Activated CD4-positive, alpha-beta T cell treated with anti-CD3 and anti-CD28 coated beads for 36 hours (primary cell): ENCODE measurements at regions of chr16 and their contacts with region 1.

Region 1: GRCh38 chr16:84504420-84505248 is at the start of gene MEAK7:
- DNase-seq: peak; percentile 99
- ATAC-seq: peak; percentile 96
- H3K4me3 Mint-ChIP-seq: peak within 1 kb of the TSS; percentile 89
- H3K27ac Mint-ChIP-seq: peak within 1 kb of the TSS; percentile 90
- H3K4me1 Mint-ChIP-seq: peaks cover 39% of the 10 kb centered on the region
- H3K27me3 Mint-ChIP-seq: no peaks in the 10 kb centered on the region
- total RNA-seq, gene MEAK7: 8.9 to 10.6 TPM

Region 2: DNA sequence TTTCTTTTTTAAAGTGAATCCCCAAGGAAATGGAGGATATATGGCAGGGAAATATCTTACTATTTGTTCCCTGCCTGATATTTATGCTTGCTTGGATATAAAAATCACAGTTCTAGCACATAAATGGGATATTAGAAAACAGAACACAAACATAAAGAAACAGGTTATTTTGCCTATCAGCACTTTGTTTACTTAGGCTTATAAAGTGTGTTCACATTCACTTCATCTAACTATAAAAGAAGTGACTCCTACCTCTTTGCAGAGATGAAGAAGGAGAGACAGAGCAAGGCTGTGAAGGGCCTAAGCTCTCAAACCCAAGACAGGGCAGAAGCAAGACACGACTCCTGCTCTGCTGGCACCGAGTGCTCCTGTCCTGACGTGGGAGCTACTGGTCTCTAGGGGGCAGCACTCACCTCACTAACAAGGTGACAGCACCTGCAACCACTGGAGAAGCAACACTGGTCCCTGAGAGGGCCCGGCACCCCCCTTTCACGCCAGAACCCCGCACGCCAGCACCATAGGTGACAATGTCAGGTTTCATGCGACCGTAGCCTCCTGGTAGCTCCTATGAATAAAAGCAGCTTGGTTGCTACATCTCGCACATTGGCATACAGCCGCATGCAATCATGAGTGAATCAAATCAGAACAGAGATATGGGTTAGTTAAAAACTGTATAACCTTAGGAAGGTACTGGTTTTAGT is 419.9 kb before region 1 on chr16:
- CTCF ChIA-PET with region 1: interaction called, 4 read pairs
- POLR2A ChIA-PET with region 1: no interaction called
- intact Hi-C with region 1: loop called in 1 of 2 experiments (anchors 10 kb)
- DNase-seq: peak; percentile 83
- ATAC-seq: peak; percentile 79
- H3K4me3 Mint-ChIP-seq: no peak overlapping the region
- H3K27ac Mint-ChIP-seq: no peak overlapping the region
- H3K4me1 Mint-ChIP-seq: peaks cover 40% of the 10 kb centered on the region
- H3K27me3 Mint-ChIP-seq: no peaks in the 10 kb centered on the region

Region 3: DNA sequence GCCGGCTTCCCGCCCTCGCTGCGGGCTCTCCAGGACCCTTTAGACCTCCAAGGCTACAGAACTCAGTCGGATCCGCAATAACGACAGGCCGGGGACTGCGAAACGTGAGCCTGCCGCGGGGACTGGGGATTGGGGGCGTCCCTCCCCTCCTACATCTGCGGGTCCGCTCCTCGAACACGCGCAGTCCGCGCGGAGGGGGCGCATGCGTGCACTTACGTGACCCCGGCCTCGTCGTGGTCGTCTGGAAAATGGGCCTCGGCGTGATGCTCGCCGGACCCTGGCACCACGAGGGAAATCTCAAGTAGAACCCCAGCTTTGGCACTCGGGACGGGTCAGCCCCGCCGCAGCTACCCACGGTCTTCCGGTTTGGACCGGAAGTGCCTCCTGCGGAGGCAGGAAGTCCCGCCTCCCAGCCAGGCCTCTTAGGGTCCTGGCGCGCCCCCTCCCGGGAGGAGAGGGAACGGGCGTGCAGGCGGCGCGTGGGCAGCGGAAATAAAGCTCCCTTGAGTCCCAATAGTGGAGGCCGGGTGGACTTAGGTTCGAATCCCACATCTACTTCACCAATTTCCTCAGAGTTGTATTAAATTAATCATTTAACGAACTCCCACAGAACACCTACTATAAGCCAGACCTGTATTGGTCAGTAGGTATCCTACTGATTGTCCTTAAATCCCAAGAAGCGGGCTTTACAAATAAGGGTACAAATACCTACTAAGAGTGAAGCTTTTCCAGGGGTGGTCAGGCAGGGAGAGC is 317.8 kb before region 1 on chr16 and contains the start of gene TAF1C:
- CTCF ChIA-PET with region 1: no interaction called
- POLR2A ChIA-PET with region 1: no interaction called
- intact Hi-C with region 1: loop called in 1 of 2 experiments (anchors 1 kb)
- DNase-seq: peak; percentile 95
- ATAC-seq: peak; percentile 96
- H3K4me3 Mint-ChIP-seq: peak within 1 kb of the TSS; percentile 94
- H3K27ac Mint-ChIP-seq: peak within 1 kb of the TSS; percentile 94
- H3K4me1 Mint-ChIP-seq: peaks cover 16% of the 10 kb centered on the region
- H3K27me3 Mint-ChIP-seq: no peaks in the 10 kb centered on the region
- total RNA-seq, gene TAF1C: 44.4 to 45.7 TPM

Region 4: GRCh38 chr16:84599521-84600202 is 95.0 kb after region 1 on chr16:
- CTCF ChIA-PET with region 1: interaction called, 18 read pairs
- POLR2A ChIA-PET with region 1: interaction called, 5 read pairs
- intact Hi-C with region 1: loop called in 1 of 2 experiments (anchors 1 kb)
- DNase-seq: peak; percentile 90
- ATAC-seq: peak; percentile 58
- H3K4me3 Mint-ChIP-seq: peak overlapping the region; percentile 74
- H3K27ac Mint-ChIP-seq: peak overlapping the region; percentile 97
- H3K4me1 Mint-ChIP-seq: peaks cover 94% of the 10 kb centered on the region
- H3K27me3 Mint-ChIP-seq: no peaks in the 10 kb centered on the region

Region 5: GRCh38 chr16:84699712-84700445 is 195.2 kb after region 1 on chr16 and contains the start of gene USP10:
- CTCF ChIA-PET with region 1: interaction called, 3 read pairs
- POLR2A ChIA-PET with region 1: no interaction called
- intact Hi-C with region 1: loop called in 1 of 2 experiments (anchors 1 kb)
- DNase-seq: peak; percentile 90
- ATAC-seq: peak; percentile 83
- H3K4me3 Mint-ChIP-seq: peak within 1 kb of the TSS; percentile 89
- H3K27ac Mint-ChIP-seq: peak within 1 kb of the TSS; percentile 97
- H3K4me1 Mint-ChIP-seq: peaks cover 38% of the 10 kb centered on the region
- H3K27me3 Mint-ChIP-seq: no peaks in the 10 kb centered on the region
- total RNA-seq, gene USP10: 117 to 133 TPM

Region 6: GRCh38 chr16:85554112-85554813 is 1049.6 kb after region 1 on chr16:
- CTCF ChIA-PET with region 1: no interaction called
- POLR2A ChIA-PET with region 1: no interaction called
- intact Hi-C with region 1: loop called in 1 of 2 experiments (anchors 5 kb)
- DNase-seq: peak; percentile 90
- ATAC-seq: peak; percentile 71
- H3K4me3 Mint-ChIP-seq: peak overlapping the region; percentile 81
- H3K27ac Mint-ChIP-seq: peak overlapping the region; percentile 88
- H3K4me1 Mint-ChIP-seq: peaks cover 32% of the 10 kb centered on the region
- H3K27me3 Mint-ChIP-seq: no peaks in the 10 kb centered on the region